Right ventricle myocardium superior (tissue), 1 donor: ENCODE measurements at regions of chr9 and their contacts with region 1.

Region 1: DNA sequence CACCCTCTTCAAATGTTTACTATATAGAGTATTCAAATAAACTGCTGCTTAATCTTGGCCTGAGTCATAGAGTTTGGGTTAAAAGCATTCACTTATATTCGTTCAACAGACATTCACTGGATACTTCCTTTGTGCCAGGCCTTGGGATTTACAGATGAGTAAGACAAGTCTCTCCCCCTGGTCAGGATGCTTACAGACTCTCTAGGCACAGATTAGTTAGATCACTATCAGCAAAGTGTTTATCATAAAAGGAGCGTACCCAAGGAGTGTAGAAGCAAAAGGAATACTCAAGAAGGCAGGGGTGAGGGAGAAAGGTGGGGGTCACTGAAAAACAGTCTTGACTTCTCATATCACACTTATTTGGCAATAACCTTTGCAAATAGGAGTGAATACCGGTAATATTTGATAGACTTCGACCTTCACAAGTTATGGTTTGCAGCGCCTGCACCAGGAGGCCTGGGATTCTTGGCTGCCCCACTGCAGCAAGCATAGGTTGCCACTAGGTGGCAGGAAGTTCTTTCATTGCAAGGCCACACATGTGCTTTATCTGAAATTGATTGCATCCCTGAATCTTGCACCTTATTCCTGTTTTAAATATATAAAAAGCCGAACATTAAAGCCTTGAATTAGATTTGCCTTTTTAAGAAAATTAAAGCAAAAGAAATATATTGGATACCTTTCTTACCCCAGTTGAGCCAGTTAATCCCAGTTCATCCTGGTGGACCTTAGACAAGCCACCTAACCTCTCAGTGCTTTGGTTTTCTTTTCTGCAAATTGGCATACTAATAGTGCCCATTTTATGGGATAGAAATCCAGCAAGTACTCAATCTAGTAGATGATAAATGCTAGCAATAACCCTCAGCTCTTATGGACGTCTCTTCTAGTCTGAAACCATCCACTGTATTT is 6.5 kb upstream of the TRMT10B start:
- DNase-seq: no peak
- ATAC-seq: peak; percentile 81

Region 2: DNA sequence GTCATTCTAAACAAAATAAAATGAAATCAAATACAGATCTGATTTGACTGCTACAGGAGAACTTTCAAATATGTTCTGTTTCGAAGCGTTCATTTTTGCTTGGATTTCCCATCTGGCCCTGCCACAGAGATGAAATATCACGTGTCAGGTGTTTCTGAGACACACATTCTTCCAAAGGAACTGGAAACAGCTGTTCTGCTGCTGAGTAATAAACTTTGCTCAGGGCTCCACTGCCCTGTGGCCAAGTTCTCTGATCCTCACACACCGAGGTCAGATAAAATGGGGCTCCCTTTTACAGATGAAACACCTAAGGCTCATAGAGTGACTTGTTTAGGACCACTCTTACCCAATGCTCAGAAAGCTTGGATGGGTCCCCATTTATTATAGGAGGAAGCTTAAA is 53.8 kb before region 1 on chr9:
- intact Hi-C with region 1: loop called (anchors 10 kb)
- DNase-seq: no peak
- ATAC-seq: no peak

Region 3: DNA sequence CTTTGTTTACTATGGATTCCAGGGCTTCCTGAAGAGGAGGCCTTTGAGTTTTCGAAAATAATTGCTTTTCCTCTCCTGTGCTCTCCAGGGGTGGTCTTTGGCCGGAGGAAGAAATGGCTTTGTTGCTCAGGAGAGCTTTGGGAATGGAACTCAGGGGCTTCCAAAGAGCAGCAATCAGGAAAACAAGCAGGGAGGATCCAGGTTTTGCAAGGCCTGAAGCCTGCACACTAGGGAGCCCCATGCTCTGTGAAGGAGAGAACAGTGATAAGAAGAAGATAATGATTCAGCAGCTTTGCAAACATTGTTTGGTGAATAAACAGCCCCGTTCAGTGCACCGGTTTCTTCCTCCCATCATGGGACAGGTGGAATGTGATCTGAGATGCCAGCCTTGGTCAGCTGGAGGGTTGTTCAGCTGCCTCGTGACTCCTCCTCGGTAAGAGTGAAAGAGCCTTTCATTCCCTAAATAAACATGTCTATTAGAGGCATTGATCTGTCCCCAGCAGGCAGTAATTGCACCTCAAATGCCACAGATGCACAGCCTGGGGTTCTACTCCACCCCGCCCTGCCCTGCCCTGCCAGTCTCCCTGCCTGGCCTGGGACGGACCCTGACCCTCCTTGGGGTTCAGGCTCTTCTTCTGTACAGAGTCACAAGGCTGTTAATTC is 633.9 kb after region 1 on chr9:
- intact Hi-C with region 1: loop called (anchors 10 kb)
- DNase-seq: no peak
- ATAC-seq: peak; percentile 22